ENCODE measurements at regions of chr15 and their contacts with region 1.

Region 1: GRCh38 chr15:94163999-94164807 is 67.2 kb upstream of the MCTP2 start:
- DNase-seq: peak in 1 of 3 donors; percentile 57
- ATAC-seq: peak; percentile 83 to 93 (median 86)
- H3K4me3 ChIP-seq: no peak overlapping the region
- H3K27ac ChIP-seq: no peak overlapping the region
- H3K4me1 ChIP-seq: no peaks in the 10 kb centered on the region
- H3K27me3 ChIP-seq: no peaks in the 10 kb centered on the region
- CTCF ChIP-seq: peak; percentile 79 to 89 (median 80)
- POLR2A ChIP-seq: no peak

Region 2: DNA sequence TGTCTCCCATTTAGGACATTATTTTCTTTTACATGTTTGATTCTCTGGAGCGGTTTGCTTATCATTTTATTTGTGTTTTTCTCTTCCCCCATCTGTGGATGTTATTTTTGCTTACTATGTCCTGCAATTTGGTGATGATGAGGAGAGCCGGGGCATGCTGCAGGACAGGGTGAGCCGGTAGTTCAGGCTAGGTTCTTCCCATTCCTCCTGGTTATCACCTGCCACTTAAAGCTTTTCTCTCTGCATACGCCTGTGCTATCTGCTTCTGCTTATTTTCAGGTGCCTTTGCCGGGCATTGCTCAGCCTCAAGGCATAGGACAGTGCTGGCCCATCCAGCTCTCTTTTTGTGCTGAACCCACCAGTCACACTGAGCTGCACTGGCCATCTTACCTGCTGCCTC is 153.0 kb after region 1 on chr15:
- intact Hi-C with region 1: loop called (anchors 10 kb)
- DNase-seq: no peak
- ATAC-seq: no peak
- H3K4me3 ChIP-seq: no peak overlapping the region
- H3K27ac ChIP-seq: no peak overlapping the region
- H3K4me1 ChIP-seq: no peaks in the 10 kb centered on the region
- H3K27me3 ChIP-seq: no peaks in the 10 kb centered on the region
- CTCF ChIP-seq: no peak
- POLR2A ChIP-seq: no peak

Region 3: DNA sequence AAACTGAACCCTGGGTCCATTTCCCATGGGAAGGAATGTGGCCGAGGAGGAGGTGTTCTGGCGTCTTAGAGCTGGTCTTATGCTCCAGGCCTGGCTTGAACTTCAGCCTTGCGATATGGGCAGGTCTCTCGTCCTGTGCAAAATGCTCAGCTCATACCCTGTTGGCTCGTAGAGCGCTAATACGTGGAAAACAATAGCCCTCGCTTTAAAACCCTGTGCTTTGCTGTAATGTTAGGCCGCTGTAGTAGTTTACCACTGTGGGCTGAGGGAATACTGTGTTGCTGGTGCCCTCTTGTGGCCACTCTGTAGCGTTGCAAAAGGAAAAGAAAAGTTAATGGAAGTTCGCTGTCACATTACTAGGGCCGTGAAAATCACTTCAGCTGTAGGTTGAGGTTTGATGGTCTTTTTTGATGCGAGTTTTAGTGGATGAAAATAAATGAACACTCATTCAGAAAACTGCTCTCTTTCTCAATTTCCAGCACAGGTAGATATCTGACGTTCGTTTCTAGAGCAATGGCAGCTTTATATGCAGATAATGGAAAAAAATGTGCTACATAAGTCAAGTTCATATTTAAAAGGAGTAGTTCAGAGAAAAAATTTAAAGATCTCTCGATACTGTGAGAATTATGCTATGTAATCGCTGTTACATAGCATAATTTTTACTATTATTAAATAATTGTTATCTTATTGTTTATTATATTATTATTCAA is 160.1 kb after region 1 on chr15:
- intact Hi-C with region 1: loop called (anchors 10 kb)
- DNase-seq: peak in 1 of 3 donors; percentile 64
- ATAC-seq: peak; percentile 95 to 98 (median 96)
- H3K4me3 ChIP-seq: no peak overlapping the region
- H3K27ac ChIP-seq: no peak overlapping the region
- H3K4me1 ChIP-seq: peaks cover 0 to 2% (median 0%) of the 10 kb centered on the region in 4 donors
- H3K27me3 ChIP-seq: no peaks in the 10 kb centered on the region
- CTCF ChIP-seq: peak; percentile 91 to 97 (median 92)
- POLR2A ChIP-seq: no peak

Measured in right lobe of liver (tissue), 6 donors.